Heart right ventricle (tissue), 16 donors: ENCODE measurements at regions of chr5 and their contacts with region 1.

Region 1: DNA sequence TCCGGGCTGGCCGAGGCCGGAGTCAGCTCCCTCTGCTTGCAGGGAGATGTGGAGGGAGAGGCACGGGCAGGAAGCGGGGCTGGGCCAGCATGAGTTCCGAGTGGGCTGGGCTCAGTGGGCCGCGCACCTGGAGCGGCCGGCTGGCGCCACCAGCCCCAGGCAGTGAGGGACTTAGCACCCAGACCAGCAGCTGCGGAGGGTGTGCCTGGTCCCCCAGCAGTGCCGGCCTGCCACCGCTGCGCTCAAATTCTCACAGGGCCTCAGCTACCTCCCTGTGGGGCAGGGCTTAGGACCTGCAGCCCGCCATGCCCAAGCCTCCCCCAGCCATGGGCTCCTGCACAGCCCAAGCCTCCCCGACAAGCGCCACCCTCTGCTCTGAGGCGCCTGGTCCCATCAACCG is 700.3 kb downstream of the DNAH5 start:
- DNase-seq: no peak
- ATAC-seq: peak in 1 of 8 donors; percentile 50
- H3K4me3 ChIP-seq: no peak overlapping the region
- H3K27ac ChIP-seq: no peak overlapping the region
- H3K4me1 ChIP-seq: no peaks in the 10 kb centered on the region
- H3K27me3 ChIP-seq: no peaks in the 10 kb centered on the region
- CTCF ChIP-seq: no peak

Region 2: GRCh38 chr5:11239261-11240015 is 2004.7 kb before region 1 on chr5:
- intact Hi-C with region 1: loop called in 1 of 10 experiments (anchors 5 kb)
- DNase-seq: no peak
- ATAC-seq: peak in 2 of 8 donors; percentile 7 to 17
- H3K4me3 ChIP-seq: no peak overlapping the region
- H3K27ac ChIP-seq: no peak overlapping the region
- H3K4me1 ChIP-seq: peaks cover 0 to 5% (median 0%) of the 10 kb centered on the region in 9 donors
- H3K27me3 ChIP-seq: no peaks in the 10 kb centered on the region
- CTCF ChIP-seq: no peak